ENCODE measurements at regions of chr5 and their contacts with region 1.

Region 1: GRCh38 chr5:79020861-79021561 is 35.9 kb upstream of the ARSB start:
- DNase-seq: peak; percentile 78
- H3K4me3 ChIP-seq: peak overlapping the region in 1 of 4 donors; percentile 5
- H3K27ac ChIP-seq: peak overlapping the region in 3 of 4 donors; percentile 43 to 78 (median 58)
- H3K4me1 ChIP-seq: peaks cover 0 to 41% (median 23%) of the 10 kb centered on the region in 4 donors
- H3K27me3 ChIP-seq: no peaks in the 10 kb centered on the region
- CTCF ChIP-seq: peak; percentile 35 to 82 (median 58)
- EP300 ChIP-seq: no peak
- POLR2A ChIP-seq: no peak

Region 2: DNA sequence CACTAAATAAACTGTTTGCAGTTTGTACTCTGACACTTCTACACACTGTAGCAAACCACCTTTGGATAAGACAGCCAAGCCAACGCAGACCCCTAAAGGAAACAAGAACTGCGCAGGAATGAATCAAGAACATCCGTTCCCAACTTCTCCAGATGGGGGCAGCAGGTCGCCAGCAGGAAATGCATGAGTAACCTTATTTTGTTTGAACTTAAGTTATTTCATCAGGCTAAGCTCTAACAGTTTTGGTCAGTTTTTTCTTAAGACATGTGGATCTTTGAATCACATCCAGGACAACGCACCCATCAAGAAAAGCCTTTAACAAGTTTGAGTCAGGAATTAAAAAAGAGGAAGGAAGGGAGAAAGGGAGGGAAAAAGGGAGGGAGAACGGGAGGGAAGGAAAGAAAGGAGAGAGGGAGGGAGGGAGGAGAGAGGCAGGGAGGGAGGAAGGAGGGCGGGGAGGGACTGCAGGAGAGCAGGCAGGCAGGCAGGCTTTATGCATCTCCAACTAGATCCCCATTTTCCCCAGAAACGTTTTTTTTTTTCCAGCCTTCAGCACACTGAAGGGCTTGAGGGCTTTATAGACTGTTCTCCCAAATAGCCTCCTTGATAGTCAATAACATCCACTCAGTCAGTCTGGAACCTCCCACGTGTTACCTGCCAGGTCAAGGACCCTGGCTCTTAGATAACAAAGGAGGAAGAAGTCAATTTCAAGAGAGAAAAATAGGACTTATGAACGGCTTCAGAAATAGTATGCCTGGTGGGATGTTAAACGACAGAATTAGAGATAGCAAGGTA is 112.8 kb after region 1 on chr5:
- intact Hi-C with region 1: loop called (anchors 1 kb)
- DNase-seq: peak; percentile 86
- H3K4me3 ChIP-seq: peak overlapping the region; percentile 9 to 42 (median 33)
- H3K27ac ChIP-seq: peak overlapping the region; percentile 68 to 85 (median 83)
- H3K4me1 ChIP-seq: peaks cover 0 to 21% (median 6%) of the 10 kb centered on the region in 4 donors
- H3K27me3 ChIP-seq: no peaks in the 10 kb centered on the region
- CTCF ChIP-seq: peak; percentile 69 to 85 (median 76)
- EP300 ChIP-seq: no peak
- POLR2A ChIP-seq: no peak

Region 3: DNA sequence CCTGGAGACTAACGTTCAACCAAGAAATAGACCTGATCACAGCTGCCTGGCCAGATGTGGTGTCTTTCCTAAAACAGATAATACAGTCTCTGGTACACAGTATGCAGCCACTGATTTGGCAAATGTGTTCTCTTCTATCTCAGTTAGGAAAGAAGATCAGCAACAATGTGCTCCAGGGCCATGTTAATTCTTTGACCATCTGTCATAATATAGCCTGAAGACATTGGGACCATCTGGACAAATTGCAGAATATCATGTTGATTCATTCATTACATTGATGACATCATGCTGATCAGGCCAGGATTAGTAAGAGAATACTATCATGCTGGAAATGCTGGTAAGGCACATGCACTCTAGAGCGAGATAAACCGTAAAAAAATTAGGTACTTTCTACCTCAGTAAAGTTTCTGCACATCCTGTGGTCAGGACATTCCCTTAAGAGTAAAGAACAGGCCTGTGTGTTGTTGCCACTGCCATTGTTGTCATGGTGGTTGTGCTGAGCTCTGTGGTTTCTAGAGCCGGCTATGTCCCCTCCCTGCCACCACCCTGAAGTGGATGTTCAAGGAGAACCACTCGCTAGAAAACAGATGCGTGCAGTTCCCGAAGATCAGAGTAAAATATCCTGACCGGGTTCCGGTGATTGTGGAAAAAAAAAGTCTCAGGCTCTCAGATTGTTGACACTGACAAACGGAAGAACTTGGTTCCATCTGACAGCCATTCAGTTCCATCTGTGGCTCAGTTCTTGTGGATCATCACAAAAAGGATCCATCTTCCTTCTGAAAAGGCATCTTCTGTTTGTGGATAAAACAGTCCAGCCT is 208.6 kb after region 1 on chr5:
- intact Hi-C with region 1: no loop called
- DNase-seq: no peak
- H3K4me3 ChIP-seq: no peak overlapping the region
- H3K27ac ChIP-seq: no peak overlapping the region
- H3K4me1 ChIP-seq: no peaks in the 10 kb centered on the region
- H3K27me3 ChIP-seq: no peaks in the 10 kb centered on the region
- CTCF ChIP-seq: no peak
- EP300 ChIP-seq: no peak
- POLR2A ChIP-seq: no peak

Region 4: DNA sequence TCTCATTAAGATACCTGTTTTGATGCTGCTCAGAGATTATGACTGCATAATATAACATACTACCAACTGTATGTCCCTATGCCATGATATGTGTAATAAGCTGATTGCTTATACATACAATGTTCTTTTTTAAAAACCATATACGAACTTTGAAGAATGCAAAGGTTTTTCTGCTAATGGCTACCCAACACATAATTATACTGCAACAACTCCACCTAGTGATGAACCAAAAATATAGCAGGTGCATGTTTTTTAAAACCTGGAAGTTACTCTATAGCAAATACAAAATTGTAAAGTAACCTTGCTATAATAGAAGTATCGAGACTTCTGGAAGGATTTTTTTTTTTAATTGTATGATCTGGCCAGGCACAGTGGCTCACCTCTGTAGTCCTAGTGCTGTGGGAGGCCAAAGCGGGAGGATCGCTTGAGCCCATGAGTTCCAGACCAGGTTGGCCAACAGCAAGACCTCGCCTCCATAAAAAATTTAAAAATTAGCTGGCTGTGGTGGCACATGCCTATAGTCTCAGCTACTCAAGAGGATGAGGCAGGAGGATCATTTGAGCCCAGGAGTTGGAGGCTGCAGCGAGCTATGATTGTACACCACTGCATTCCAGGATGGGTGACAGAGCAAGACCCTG is 443.8 kb after region 1 on chr5:
- intact Hi-C with region 1: loop called (anchors 2 kb)
- DNase-seq: no peak
- H3K4me3 ChIP-seq: no peak overlapping the region
- H3K27ac ChIP-seq: no peak overlapping the region
- H3K4me1 ChIP-seq: no peaks in the 10 kb centered on the region
- H3K27me3 ChIP-seq: no peaks in the 10 kb centered on the region
- CTCF ChIP-seq: peak; percentile 42 to 54 (median 49)
- EP300 ChIP-seq: no peak
- POLR2A ChIP-seq: no peak

Region 5: DNA sequence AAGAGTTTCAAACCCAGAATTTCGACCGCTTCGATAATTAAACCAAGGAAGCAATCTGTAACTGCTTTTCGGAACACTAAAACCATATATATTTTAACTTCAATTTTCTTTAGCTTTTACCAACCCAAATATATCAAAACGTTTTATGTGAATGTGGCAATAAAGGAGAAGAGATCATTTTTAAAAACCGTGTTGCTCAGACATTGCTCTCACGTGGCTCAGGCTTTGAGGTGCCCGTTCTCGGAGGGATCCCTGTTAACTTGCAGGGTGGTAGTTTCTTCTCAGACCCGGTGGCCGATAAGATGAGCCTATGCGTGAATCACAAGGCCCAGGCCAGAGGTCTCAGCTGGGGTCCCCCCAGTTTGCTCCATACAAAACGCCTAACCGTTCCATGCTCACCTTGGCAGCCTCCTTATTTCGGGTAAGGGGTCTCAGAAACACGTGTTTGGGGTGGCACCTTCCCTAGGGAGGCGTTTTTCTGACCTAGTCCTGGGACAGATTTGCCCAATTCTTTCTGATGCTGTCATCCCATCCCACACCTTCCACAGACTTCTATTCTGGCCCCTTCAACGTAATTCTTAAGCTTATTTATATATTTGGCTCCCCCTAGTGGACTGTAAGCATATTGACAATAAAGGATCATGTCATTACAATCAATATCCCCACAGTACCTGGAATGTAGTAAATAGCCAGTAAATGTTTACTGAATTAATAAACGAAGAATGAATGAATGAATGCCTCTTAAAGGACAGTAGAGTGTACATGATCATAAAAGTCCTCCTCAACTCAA is 1062.3 kb after region 1 on chr5:
- intact Hi-C with region 1: loop called (anchors 5 kb)
- DNase-seq: peak; percentile 70
- H3K4me3 ChIP-seq: peak overlapping the region; percentile 2 to 39 (median 32)
- H3K27ac ChIP-seq: peak overlapping the region; percentile 62 to 76 (median 74)
- H3K4me1 ChIP-seq: peaks cover 0 to 14% (median 7%) of the 10 kb centered on the region in 4 donors
- H3K27me3 ChIP-seq: no peaks in the 10 kb centered on the region
- CTCF ChIP-seq: peak; percentile 63 to 76 (median 68)
- EP300 ChIP-seq: no peak
- POLR2A ChIP-seq: no peak

Measured in sigmoid colon (tissue), 7 donors.